Activated CD4-positive, alpha-beta memory T cell treated with anti-CD3 and anti-CD28 coated beads for 36 hours (primary cell): ENCODE measurements at regions of chr11 and their contacts with region 1.

Region 1: GRCh38 chr11:16902781-16903378 is 111.3 kb downstream of the PLEKHA7 start:
- DNase-seq: peak; percentile 29
- H3K4me3 Mint-ChIP-seq: peak overlapping the region; percentile 31
- H3K27ac Mint-ChIP-seq: peak overlapping the region; percentile 95
- H3K4me1 Mint-ChIP-seq: peaks cover 48% of the 10 kb centered on the region
- H3K27me3 Mint-ChIP-seq: no peaks in the 10 kb centered on the region

Region 2: GRCh38 chr11:16750417-16750816 is 152.5 kb before region 1 on chr11:
- CTCF ChIA-PET with region 1: no interaction called
- POLR2A ChIA-PET with region 1: interaction called, 5 read pairs
- intact Hi-C with region 1: loop called (anchors 1 kb)
- DNase-seq: no peak
- H3K4me3 Mint-ChIP-seq: no peak overlapping the region
- H3K27ac Mint-ChIP-seq: peak overlapping the region; percentile 80
- H3K4me1 Mint-ChIP-seq: peaks cover 34% of the 10 kb centered on the region
- H3K27me3 Mint-ChIP-seq: no peaks in the 10 kb centered on the region

Region 3: GRCh38 chr11:16763746-16764145 is 139.1 kb before region 1 on chr11:
- CTCF ChIA-PET with region 1: no interaction called
- POLR2A ChIA-PET with region 1: no interaction called
- intact Hi-C with region 1: no loop called
- DNase-seq: no peak
- H3K4me3 Mint-ChIP-seq: no peak overlapping the region
- H3K27ac Mint-ChIP-seq: no peak overlapping the region
- H3K4me1 Mint-ChIP-seq: peaks cover 13% of the 10 kb centered on the region
- H3K27me3 Mint-ChIP-seq: no peaks in the 10 kb centered on the region

Region 4: DNA sequence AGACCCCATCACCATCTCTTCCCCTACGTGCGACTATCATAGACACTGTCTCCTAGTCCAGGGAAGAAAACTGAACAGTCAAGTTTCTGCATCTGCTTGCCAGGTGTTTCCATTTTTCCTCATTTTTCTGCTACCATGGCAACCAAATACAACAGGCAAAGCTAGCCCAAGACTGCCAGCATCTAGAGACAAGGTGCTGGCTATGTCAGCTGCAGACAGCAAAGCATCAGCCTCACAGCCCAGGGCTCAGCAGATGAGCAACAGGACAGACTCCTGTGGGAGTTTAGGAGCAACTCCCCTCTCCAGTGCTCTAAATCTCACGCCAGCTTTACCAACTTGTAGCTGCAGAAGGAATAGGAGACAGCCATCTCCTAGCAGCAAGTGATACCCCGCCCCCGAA is 40.1 kb before region 1 on chr11:
- CTCF ChIA-PET with region 1: no interaction called
- POLR2A ChIA-PET with region 1: interaction called, 3 read pairs
- intact Hi-C with region 1: loop called (anchors 1 kb)
- DNase-seq: no peak
- H3K4me3 Mint-ChIP-seq: no peak overlapping the region
- H3K27ac Mint-ChIP-seq: no peak overlapping the region
- H3K4me1 Mint-ChIP-seq: peaks cover 20% of the 10 kb centered on the region
- H3K27me3 Mint-ChIP-seq: peaks cover 1% of the 10 kb centered on the region

Region 5: DNA sequence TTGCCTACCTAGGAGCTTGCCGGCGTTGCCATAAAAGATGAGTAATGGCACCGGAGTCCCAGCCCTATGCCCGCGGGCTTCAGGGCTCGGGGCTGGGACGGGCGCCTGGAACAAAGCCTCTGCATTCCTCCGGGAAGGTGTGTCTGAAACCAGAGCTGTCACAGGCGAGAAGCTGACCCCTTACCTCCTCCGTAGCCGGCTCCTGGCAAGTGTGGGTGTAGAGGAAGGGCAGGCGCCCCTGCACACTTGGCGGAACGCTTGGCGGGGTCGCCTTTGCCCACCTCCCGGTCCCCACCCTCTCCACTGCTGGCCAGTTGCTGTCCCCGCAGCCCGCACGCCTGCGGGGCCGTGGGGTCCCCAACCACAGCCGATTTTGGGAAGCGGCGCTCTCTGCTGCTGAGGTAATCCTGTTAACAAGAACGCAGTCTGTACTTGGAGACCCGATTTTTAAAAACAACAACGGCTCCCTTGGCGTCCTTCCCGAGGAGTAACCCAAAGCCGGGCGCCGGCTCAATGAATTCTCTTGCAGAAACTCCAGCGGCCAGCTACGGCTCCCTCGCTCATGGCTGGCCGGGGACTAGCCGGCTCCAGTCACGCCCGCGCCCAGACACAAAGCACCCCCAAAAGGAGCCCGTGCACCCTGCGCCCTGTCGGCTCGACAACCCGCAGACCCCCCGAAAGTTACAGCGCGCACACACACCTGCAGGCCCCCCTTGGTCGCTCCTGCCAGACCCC is 22.1 kb after region 1 on chr11:
- CTCF ChIA-PET with region 1: interaction called, 5 read pairs
- POLR2A ChIA-PET with region 1: interaction called, 6 read pairs
- intact Hi-C with region 1: loop called (anchors 1 kb)
- DNase-seq: no peak
- H3K4me3 Mint-ChIP-seq: peak overlapping the region; percentile 66
- H3K27ac Mint-ChIP-seq: no peak overlapping the region
- H3K4me1 Mint-ChIP-seq: peaks cover 23% of the 10 kb centered on the region
- H3K27me3 Mint-ChIP-seq: peaks cover 38% of the 10 kb centered on the region

Region 6: DNA sequence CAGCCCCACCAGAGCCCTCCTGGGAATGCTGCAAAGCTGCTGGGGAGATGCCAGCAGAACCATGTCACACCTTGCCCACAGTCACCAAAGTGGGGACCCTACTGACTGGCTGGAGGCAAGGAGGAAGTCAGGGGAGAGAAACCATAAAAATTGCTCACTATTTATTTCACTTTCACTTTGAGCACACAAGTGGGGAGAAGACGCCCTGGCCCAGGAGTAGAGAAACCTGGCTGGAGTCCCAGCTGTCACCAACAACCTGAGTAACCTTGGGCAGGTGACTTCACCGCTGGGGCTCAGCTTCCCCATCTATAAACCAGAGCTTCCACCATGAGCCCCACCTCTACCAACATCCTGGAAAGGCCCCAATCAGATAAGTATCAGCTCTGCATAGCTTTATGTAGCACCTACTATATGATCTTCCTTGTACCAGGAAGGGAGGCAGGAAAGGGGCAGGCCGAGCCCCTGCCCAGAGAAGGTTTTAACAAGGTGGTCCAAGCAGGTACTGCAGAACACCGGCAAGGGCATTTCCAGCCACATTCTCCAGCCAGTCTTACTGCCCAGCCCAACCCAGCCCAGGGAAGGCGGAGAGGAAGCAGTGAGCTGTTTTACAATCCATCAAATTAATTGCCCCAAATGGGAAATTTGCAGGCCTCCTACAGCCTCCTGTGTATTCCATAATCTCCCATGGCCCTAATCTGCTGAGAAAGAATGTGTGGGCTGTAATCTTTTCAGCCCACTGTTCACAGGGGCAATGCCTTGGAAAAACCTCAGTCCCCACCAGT is 83.7 kb after region 1 on chr11:
- CTCF ChIA-PET with region 1: no interaction called
- POLR2A ChIA-PET with region 1: interaction called, 5 read pairs
- intact Hi-C with region 1: loop called (anchors 1 kb)
- DNase-seq: peak; percentile 77
- H3K4me3 Mint-ChIP-seq: no peak overlapping the region
- H3K27ac Mint-ChIP-seq: no peak overlapping the region
- H3K4me1 Mint-ChIP-seq: peaks cover 19% of the 10 kb centered on the region
- H3K27me3 Mint-ChIP-seq: no peaks in the 10 kb centered on the region

Region 7: DNA sequence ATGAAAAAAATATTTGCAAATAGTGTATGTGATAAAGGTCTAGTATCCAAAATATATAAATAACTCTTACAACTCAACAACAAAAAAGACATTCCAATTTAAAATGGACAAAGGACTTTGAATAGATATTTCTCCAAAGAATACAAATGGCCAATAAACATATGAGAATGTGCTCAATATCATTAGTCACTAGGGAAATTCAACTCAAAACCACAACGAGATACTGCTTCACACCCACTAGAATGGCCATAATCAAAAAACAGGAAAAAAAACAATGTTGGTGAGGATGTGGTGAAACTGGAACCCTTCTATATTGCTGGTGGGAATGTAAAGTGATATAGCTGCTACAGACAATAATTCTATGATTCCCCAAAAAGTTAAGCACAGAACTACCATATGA is 213.2 kb after region 1 on chr11:
- CTCF ChIA-PET with region 1: no interaction called
- POLR2A ChIA-PET with region 1: no interaction called
- intact Hi-C with region 1: no loop called
- DNase-seq: no peak
- H3K4me3 Mint-ChIP-seq: no peak overlapping the region
- H3K27ac Mint-ChIP-seq: no peak overlapping the region
- H3K4me1 Mint-ChIP-seq: no peaks in the 10 kb centered on the region
- H3K27me3 Mint-ChIP-seq: no peaks in the 10 kb centered on the region